Colonic mucosa (tissue), 4 donors: ENCODE measurements at regions of chr16 and their contacts with region 1.

Region 1: GRCh38 chr16:30805370-30806169 is 18.6 kb upstream of the ZNF629 start:
- DNase-seq: peak; percentile 86
- H3K4me3 ChIP-seq: peak overlapping the region; percentile 68
- H3K27ac ChIP-seq: peak overlapping the region; percentile 81
- H3K4me1 ChIP-seq: peaks cover 4% of the 10 kb centered on the region
- H3K27me3 ChIP-seq: no peaks in the 10 kb centered on the region
- CTCF ChIP-seq: no peak

Region 2: DNA sequence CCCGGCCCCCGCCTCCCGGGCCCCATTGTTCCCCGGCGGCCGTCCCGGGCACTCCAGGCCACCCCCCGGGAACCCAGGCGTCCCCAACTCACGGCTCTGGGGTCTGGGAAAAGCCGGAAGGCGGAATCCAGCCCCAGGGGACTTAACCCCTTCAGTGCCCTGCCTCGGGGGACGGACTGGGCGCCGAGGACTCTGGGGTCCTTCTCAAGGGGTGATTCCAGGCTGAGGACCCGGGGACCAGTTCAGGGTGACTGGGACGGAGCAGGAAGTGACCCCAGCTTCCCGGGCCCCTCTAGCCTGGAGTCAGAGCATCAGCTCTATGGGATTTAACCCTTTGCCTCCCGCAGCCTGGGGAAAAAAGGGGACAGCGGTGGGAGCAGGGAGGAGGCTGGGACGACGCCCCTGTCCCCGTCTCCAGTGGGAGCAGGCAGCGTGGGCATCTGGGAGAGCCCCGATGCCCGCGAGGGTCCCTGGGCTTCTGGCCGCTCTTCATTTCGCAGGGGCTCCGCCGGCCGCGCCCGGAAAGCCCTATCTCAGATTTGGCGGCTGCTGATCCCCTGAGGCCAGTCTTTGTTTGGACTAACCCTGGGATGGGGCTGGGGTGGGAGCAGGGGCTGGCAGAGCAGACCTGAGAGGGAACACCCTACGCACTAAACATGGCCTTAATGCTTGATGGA is 18.5 kb before region 1 on chr16 and contains the start of gene ZNF629:
- intact Hi-C with region 1: loop called (anchors 2 kb)
- DNase-seq: peak; percentile 75
- H3K4me3 ChIP-seq: peak within 1 kb of the TSS; percentile 83
- H3K27ac ChIP-seq: peak within 1 kb of the TSS; percentile 64
- H3K4me1 ChIP-seq: peaks cover 8% of the 10 kb centered on the region
- H3K27me3 ChIP-seq: no peaks in the 10 kb centered on the region
- CTCF ChIP-seq: no peak
- total RNA-seq, gene ZNF629: 11.8 to 15.2 TPM